CD8-positive, alpha-beta T cell (primary cell): ENCODE measurements at regions of chr2 and their contacts with region 1.

Region 1: GRCh38 chr2:64737547-64737946 is 83.8 kb upstream of the SERTAD2 start:
- DNase-seq: no peak
- ATAC-seq: peak; percentile 38
- H3K4me3 ChIP-seq: no peak overlapping the region
- H3K4me3 Mint-ChIP-seq: no peak overlapping the region
- H3K27ac ChIP-seq: no peak overlapping the region
- H3K27ac Mint-ChIP-seq: no peak overlapping the region
- H3K4me1 ChIP-seq: peaks cover 10% of the 10 kb centered on the region
- H3K4me1 Mint-ChIP-seq: peaks cover 16% of the 10 kb centered on the region
- H3K27me3 ChIP-seq: no peaks in the 10 kb centered on the region
- H3K27me3 Mint-ChIP-seq: no peaks in the 10 kb centered on the region
- CTCF ChIP-seq: no peak

Region 2: GRCh38 chr2:64439194-64439593 is 298.4 kb before region 1 on chr2:
- CTCF ChIA-PET with region 1: no interaction called
- POLR2A ChIA-PET with region 1: no interaction called
- intact Hi-C with region 1: no loop called
- DNase-seq: no peak
- ATAC-seq: no peak
- H3K4me3 ChIP-seq: no peak overlapping the region
- H3K4me3 Mint-ChIP-seq: no peak overlapping the region
- H3K27ac ChIP-seq: no peak overlapping the region
- H3K27ac Mint-ChIP-seq: no peak overlapping the region
- H3K4me1 ChIP-seq: no peaks in the 10 kb centered on the region
- H3K4me1 Mint-ChIP-seq: no peaks in the 10 kb centered on the region
- H3K27me3 ChIP-seq: no peaks in the 10 kb centered on the region
- H3K27me3 Mint-ChIP-seq: peaks cover 27% of the 10 kb centered on the region
- CTCF ChIP-seq: no peak

Region 3: DNA sequence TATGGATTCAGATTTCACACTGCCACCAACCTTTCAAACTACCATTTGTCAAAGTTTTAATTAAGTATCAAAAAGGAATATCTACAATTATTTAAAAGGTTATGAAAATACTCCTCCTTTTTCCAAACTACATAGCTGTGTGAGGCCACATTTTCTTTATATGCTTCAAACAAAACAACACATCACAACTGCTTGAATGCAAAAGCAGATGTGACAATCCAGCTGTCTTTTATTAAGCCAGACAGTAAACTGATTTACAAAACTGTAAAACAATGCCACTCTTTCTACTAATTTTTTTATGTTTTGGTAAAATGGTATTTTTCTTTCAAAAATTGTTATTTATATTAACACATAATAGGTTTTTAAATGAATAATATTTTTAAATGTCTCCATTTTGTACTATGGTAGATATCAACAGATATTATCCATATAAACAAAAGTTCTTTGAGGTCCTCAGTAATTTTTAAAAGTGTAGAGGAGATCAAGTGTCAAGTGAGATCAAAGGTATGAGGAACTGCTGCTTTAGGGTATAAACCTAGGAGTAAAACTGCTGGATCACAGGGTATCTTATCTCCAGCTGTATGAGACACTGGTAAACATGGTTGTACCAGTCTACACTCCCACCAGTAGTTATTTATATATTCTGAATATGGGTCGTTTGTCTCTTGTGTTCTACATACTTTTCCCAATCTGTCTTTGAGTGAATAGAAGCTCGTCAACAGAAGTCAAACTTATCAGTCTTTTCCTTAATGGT is 15.1 kb before region 1 on chr2:
- CTCF ChIA-PET with region 1: interaction called, 3 read pairs
- POLR2A ChIA-PET with region 1: interaction called, 6 read pairs
- intact Hi-C with region 1: loop called in 1 of 2 experiments (anchors 2 kb)
- DNase-seq: no peak
- ATAC-seq: no peak
- H3K4me3 ChIP-seq: no peak overlapping the region
- H3K4me3 Mint-ChIP-seq: no peak overlapping the region
- H3K27ac ChIP-seq: no peak overlapping the region
- H3K27ac Mint-ChIP-seq: no peak overlapping the region
- H3K4me1 ChIP-seq: peaks cover 15% of the 10 kb centered on the region
- H3K4me1 Mint-ChIP-seq: peaks cover 29% of the 10 kb centered on the region
- H3K27me3 ChIP-seq: no peaks in the 10 kb centered on the region
- H3K27me3 Mint-ChIP-seq: no peaks in the 10 kb centered on the region
- CTCF ChIP-seq: no peak